Cardiac septum (tissue), 1 donor: ENCODE measurements at regions of chr19 and their contacts with region 1.

Region 1: GRCh38 chr19:35545001-35545911 is at the start of gene TMEM147:
- DNase-seq: peak; percentile 95
- total RNA-seq, gene TMEM147: 64.4 TPM

Region 2: GRCh38 chr19:35612559-35613321 is 67.5 kb after region 1 on chr19 and contains the start of gene HAUS5:
- intact Hi-C with region 1: loop called (anchors 5 kb)
- DNase-seq: peak; percentile 97
- total RNA-seq, gene HAUS5: 5.9 TPM

Region 3: DNA sequence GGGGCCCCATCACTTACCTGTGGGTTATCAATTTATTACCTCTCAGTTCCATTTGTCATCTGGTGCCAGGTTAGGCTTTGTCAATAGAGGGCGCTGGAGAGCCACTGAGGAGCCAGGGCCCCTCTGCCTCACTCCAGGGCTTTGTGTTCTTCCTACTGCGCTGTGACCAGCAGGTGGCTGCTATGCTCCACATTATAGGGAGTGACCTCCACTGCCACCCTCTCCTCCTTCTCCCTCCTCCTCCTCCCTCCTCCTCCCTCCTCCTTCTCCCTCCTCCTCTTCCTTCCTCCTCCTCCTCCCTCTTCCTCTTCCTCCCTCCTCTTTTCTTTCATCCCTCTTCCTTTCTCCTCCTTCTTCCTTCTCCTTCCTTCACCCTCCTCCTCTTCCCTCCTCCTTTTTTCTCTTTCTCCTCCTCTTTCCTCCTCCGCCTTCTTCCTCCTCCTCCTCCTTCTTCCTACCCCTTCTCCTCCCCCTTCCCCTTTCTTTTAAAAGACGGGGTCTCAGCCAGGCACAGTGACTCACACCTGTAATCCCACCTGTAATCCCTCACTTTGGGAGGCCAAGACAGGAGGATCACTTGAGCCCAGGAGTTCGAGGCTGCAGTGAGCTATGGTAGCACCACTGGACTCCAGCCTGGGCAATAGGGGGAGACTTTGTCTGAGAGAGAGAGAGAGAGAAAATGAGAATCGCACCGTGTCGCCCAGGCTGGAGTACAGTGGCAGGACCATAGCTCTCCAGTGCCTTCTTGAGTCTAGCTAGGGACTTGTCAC is 148.8 kb after region 1 on chr19:
- intact Hi-C with region 1: loop called (anchors 5 kb)
- DNase-seq: peak; percentile 92